Lower leg skin (tissue), 4 donors: ENCODE measurements at regions of chr16 and their contacts with region 1.

Region 1: DNA sequence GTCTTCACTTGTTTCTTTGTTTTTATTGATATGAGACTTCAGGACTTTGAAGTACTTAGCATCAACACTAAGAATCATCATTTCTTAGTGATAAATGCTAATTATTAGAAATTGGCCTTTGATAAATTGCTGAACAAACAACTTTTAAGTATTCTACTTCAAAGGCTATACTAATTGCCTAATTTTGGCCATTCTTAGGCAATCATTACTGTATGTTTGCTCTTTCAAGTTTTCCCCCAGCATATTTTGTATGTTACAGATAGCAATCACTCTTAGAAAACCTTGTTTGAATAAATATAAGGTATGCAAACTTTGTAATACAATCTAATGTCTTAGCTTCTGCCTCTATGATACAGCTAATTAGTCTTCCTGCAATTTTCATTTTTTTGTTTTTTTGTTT is 46.0 kb downstream of the NQO1 start:
- DNase-seq: no peak
- H3K4me3 ChIP-seq: no peak overlapping the region
- CTCF ChIP-seq: no peak
- POLR2A ChIP-seq: no peak

Region 2: GRCh38 chr16:69775563-69775962 is 95.2 kb after region 1 on chr16:
- intact Hi-C with region 1: loop called (anchors 5 kb)
- DNase-seq: no peak
- H3K4me3 ChIP-seq: no peak overlapping the region
- CTCF ChIP-seq: no peak
- POLR2A ChIP-seq: no peak